ENCODE measurements at regions of chr19 and their contacts with region 1.

Region 1: DNA sequence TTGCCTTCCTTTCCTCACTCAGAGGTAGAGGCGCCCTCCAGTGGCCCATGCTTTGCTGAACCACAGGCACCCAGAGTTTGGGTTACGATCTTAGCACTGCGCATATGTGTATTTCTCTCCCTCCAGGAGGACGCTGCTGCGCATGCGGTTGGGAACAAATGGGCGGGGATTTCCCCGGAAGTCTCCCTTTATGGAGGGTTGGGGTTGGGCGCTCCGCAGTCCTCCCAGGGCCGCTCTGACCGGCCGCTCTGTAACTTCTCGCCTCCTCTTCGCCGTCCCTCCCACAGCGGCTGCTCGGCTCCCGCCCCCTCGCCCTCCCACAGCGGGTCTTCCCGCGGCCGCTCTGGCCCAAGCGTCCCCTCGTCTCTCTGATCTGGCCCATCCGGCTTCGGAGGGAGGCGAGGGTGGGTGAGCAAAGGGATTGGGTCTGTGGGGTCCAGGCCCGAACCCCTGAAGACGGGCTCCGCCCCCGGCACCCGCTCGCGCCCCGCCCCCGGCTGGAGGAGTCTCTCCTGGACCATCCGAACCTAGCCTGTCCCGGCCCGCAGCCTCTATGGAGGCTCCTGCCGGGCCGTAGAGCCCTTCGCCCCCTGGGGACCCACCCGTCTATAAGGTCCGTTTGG is at the start of gene MEGF8:
- DNase-seq: peak; percentile 97 to 99 (median 98)
- ATAC-seq: peak; percentile 95
- H3K4me3 ChIP-seq: peak within 1 kb of the TSS; percentile 84
- H3K4me3 Mint-ChIP-seq: peak within 1 kb of the TSS; percentile 94
- H3K27ac ChIP-seq: peak within 1 kb of the TSS; percentile 46 to 55
- H3K27ac Mint-ChIP-seq: peak within 1 kb of the TSS; percentile 50
- H3K4me1 ChIP-seq: peaks cover 26% of the 10 kb centered on the region
- H3K4me1 Mint-ChIP-seq: peaks cover 25% of the 10 kb centered on the region
- H3K27me3 ChIP-seq: peaks cover 16 to 21% of the 10 kb centered on the region in 2 experiments
- H3K27me3 Mint-ChIP-seq: peaks cover 25% of the 10 kb centered on the region
- CTCF ChIP-seq: peak; percentile 90
- total RNA-seq, gene MEGF8: 4.1 to 4.2 TPM

Region 2: DNA sequence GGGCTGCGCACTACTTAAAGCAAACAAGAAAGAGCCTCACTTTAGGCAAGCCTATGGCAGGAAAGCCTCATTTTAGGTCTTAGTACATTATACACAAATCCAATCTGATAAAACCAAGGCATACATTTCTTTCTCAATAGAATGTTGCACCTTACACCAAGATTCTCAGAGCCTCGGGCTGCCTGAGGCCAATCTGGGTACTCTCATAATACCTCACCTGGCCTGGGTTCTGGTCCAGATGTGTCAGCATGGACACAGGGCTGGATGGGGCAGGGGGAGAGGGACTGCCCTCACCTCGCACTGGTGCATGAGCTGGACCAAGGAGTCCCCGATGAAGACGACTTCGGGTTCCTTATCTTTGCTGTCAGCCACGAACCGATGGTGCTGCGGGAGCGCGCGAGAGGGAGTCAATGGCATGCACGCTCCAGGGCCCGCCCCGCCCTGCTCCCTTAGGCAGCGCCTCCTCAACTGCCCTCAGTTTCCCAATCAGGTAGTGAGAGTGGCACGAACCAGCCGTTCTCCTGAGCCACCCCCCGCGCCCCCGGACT is 23.7 kb before region 1 on chr19 and contains the start of gene PRR19:
- CTCF ChIA-PET with region 1: interaction called, 3 read pairs
- POLR2A ChIA-PET with region 1: no interaction called
- intact Hi-C with region 1: loop called (anchors 1 kb)
- DNase-seq: peak in 3 of 14 experiments; percentile 33 to 52 (median 46)
- ATAC-seq: peak; percentile 15
- H3K4me3 ChIP-seq: peak within 1 kb of the TSS; percentile 91
- H3K4me3 Mint-ChIP-seq: peak within 1 kb of the TSS; percentile 88
- H3K27ac ChIP-seq: peak within 1 kb of the TSS; percentile 29 to 58
- H3K27ac Mint-ChIP-seq: peak within 1 kb of the TSS; percentile 66
- H3K4me1 ChIP-seq: peaks cover 28% of the 10 kb centered on the region
- H3K4me1 Mint-ChIP-seq: peaks cover 26% of the 10 kb centered on the region
- H3K27me3 ChIP-seq: no peaks in the 10 kb centered on the region
- H3K27me3 Mint-ChIP-seq: no peaks in the 10 kb centered on the region
- CTCF ChIP-seq: no peak
- total RNA-seq, gene PRR19: 0.16 TPM in 1 of 2 experiments, not detected in the other

Region 3: DNA sequence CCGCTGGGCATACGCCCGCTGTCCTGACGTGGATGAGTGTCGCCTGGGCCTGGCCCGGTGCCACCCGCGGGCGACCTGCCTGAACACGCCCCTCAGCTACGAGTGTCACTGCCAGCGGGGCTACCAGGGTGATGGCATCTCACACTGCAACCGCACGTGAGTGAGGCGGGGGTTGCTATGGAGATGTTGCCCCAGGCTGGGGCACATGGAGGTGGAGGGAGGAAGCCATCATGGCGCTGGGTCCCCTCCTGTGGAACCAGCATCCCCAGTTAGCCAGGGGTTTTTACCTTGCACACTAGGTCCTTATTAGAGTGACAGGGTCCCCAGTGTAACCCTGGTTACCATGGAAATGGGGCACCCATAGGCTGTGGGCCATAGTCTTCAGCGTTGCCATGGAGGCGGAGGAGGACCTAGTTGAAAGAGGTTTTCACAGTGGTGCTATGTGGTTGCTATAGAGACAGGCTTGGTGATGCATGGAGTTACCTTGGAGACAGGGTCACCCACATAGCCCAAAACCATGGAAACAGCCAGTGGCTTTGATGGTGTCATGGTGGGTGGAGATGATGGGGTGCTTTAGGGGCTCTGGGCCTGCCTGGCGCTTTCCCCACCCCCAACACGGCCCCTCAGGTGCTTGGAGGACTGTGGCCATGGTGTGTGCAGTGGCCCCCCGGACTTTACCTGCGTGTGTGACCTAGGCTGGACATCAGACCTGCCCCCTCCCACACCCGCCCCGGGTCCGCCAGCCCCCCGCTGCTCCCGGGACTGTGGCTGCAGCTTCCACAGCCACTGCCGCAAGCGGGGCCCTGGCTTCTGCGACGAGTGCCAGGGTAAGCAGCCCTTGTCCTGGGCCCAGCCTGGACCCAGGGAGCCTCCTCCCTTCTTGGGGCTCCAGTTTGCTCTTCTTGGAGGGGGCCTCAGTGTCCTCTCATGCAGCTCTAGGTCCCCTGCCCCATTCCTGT is 27.2 kb after region 1 on chr19:
- CTCF ChIA-PET with region 1: no interaction called
- POLR2A ChIA-PET with region 1: no interaction called
- intact Hi-C with region 1: no loop called
- DNase-seq: peak in 2 of 14 experiments; percentile 12 to 22
- ATAC-seq: no peak
- H3K4me3 ChIP-seq: no peak overlapping the region
- H3K4me3 Mint-ChIP-seq: no peak overlapping the region
- H3K27ac ChIP-seq: no peak overlapping the region
- H3K27ac Mint-ChIP-seq: no peak overlapping the region
- H3K4me1 ChIP-seq: no peaks in the 10 kb centered on the region
- H3K4me1 Mint-ChIP-seq: no peaks in the 10 kb centered on the region
- H3K27me3 ChIP-seq: no peaks in the 10 kb centered on the region
- H3K27me3 Mint-ChIP-seq: no peaks in the 10 kb centered on the region
- CTCF ChIP-seq: no peak

Region 4: DNA sequence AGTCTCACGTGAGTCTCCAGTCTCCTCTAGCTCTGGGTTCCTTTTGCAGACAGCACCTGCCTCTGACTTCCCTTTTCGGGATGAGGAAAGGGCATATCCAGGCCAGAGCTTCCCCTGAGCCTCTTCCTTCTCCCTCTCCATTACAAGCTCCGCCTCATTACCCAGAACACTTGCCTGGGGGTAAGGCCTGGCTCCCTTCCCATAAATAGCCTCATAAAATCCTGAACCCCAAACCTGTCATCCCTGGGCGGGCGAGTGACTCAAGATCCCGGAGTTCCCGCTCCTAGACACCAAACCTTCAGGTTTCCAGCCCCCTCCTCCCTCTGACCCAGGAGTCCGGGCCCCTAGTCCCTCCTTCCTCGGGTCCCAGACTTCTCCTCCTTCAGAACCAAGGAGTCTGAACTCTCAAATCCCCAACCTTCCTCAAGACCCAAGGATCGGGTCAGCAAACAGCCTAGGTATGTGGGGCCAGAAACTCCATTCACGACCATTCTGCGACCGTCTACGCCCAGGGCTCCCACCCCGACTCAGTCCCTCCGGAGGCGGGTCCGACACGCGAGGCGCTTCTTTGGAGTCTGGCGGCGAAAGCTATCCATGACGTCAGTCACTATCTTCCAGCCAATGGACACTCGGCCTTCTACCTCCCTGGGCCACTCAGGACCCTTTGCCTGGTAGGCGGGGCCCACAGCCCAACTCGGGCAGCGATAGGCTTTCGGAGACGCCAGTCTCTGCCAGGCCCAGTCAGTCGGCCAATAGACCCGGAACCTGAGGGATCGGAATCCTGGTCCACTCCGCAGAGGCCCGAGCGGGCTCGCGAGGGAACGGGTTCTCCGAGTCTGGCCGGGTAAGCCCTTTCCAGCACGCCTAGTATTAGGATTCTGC is 71.2 kb after region 1 on chr19:
- CTCF ChIA-PET with region 1: no interaction called
- POLR2A ChIA-PET with region 1: no interaction called
- intact Hi-C with region 1: loop called (anchors 1 to 5 kb)
- DNase-seq: peak; percentile 77 to 96 (median 90)
- ATAC-seq: peak; percentile 90
- H3K4me3 ChIP-seq: peak overlapping the region; percentile 97
- H3K4me3 Mint-ChIP-seq: peak overlapping the region; percentile 89
- H3K27ac ChIP-seq: peak overlapping the region in 1 of 2 donors; percentile 60
- H3K27ac Mint-ChIP-seq: peak overlapping the region; percentile 76
- H3K4me1 ChIP-seq: peaks cover 34% of the 10 kb centered on the region
- H3K4me1 Mint-ChIP-seq: peaks cover 43% of the 10 kb centered on the region
- H3K27me3 ChIP-seq: no peaks in the 10 kb centered on the region
- H3K27me3 Mint-ChIP-seq: peaks cover 6% of the 10 kb centered on the region
- CTCF ChIP-seq: no peak